SK-N-SH (cell line): ENCODE measurements at regions of chr11 and their contacts with region 1.

Region 1: GRCh38 chr11:123707606-123708205 is 33.8 kb downstream of the ZNF202 start:
- DNase-seq: peak; percentile 70
- H3K4me3 ChIP-seq: no peak overlapping the region
- H3K27ac ChIP-seq: no peak overlapping the region
- H3K4me1 ChIP-seq: peaks cover 0 to 2% of the 10 kb centered on the region in 2 experiments; a peak in 1 of 4 replicates
- H3K27me3 ChIP-seq: peaks cover 5% of the 10 kb centered on the region; the same call in 1 of the 2 replicates
- CTCF ChIP-seq: peak; percentile 91
- EP300 ChIP-seq: no peak
- RAD21 ChIP-seq: peak; percentile 99

Region 2: DNA sequence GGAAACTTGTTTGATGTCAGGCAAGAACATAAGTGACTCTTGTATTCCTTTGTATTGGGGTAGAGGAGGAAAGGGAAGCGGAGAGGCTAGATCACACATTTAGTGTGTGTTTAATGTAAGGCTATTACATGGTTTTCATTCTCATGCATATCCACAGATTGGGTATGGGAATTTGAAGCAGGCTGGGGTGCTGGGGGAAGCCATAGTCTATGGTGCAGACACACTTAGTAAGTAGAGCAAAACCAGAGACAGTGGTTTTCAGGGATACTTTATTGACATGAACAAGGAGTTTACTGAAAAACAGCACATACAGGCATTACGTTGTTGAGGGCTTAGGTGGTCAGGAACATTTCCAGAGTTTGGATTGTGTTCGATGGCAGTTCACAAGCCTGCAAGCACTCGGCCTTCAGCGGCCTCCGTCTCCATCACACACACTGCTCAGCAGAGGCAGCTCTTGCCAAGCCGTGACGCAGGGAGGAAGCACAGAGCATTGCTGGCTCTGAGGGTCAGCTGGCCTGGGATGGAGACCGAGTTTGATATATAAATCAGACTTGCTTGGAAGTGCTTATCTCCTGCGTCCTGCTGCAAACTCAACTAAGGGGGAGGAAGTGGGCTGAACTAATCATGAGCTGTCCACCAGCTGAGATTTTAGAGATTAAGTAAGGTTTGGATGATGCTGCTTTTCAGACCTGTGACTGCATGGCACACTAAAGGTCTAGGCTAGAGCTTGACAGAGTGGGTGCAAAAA is 78.6 kb before region 1 on chr11:
- CTCF ChIA-PET with region 1: interaction called, 441 read pairs
- POLR2A ChIA-PET with region 1: no interaction called
- DNase-seq: peak; percentile 74
- H3K4me3 ChIP-seq: no peak overlapping the region
- H3K27ac ChIP-seq: peak overlapping the region; percentile 43 to 85; a peak in 3 of 4 replicates
- H3K4me1 ChIP-seq: peaks cover 4 to 12% of the 10 kb centered on the region in 2 experiments; a peak in 2 of 4 replicates
- H3K27me3 ChIP-seq: no peaks in the 10 kb centered on the region
- CTCF ChIP-seq: no peak
- EP300 ChIP-seq: peak; percentile 23 to 28; a peak in 1 of 4 replicates
- RAD21 ChIP-seq: peak; percentile 21

Region 3: GRCh38 chr11:123654566-123655081 is 53.1 kb before region 1 on chr11 and contains the start of gene SCN3B:
- CTCF ChIA-PET with region 1: interaction called, 388 read pairs
- POLR2A ChIA-PET with region 1: interaction called, 12 read pairs
- DNase-seq: peak; percentile 99
- H3K4me3 ChIP-seq: peak within 1 kb of the TSS; percentile 72 to 76
- H3K27ac ChIP-seq: peak within 1 kb of the TSS in 1 of 2 experiments; percentile 90; a peak in 2 of 4 replicates
- H3K4me1 ChIP-seq: peaks cover 0 to 21% of the 10 kb centered on the region in 2 experiments; a peak in 2 of 4 replicates
- H3K27me3 ChIP-seq: peaks cover 15% of the 10 kb centered on the region; the same call in 1 of the 2 replicates
- CTCF ChIP-seq: no peak
- EP300 ChIP-seq: 0 out of 4 replicates have a peak, but pooled peaks of 1 of the 2 experiments have one; percentile 6
- RAD21 ChIP-seq: no peak
- polyA plus RNA-seq, gene SCN3B: 0.23 and 0.44 TPM in 2 replicates

Region 4: GRCh38 chr11:123682696-123683410 is 24.9 kb before region 1 on chr11:
- CTCF ChIA-PET with region 1: interaction called, 45 read pairs
- POLR2A ChIA-PET with region 1: interaction called, 4 read pairs
- DNase-seq: peak; percentile 75
- H3K4me3 ChIP-seq: no peak overlapping the region; a peak in 1 of 4 replicates
- H3K27ac ChIP-seq: peak overlapping the region in 1 of 2 experiments; percentile 98; a peak in 2 of 4 replicates
- H3K4me1 ChIP-seq: peaks cover 0 to 17% of the 10 kb centered on the region in 2 experiments; a peak in 2 of 4 replicates
- H3K27me3 ChIP-seq: peaks cover 6% of the 10 kb centered on the region; the same call in 1 of the 2 replicates
- CTCF ChIP-seq: no peak
- EP300 ChIP-seq: peak in 1 of 2 experiments; percentile 52; a peak in 2 of 4 replicates
- RAD21 ChIP-seq: peak; percentile 7; the same call in 1 of the 2 replicates

Region 5: GRCh38 chr11:123719452-123719851 is 11.7 kb after region 1 on chr11:
- CTCF ChIA-PET with region 1: interaction called, 29 read pairs
- POLR2A ChIA-PET with region 1: no interaction called
- DNase-seq: no peak
- H3K4me3 ChIP-seq: no peak overlapping the region
- H3K27ac ChIP-seq: no peak overlapping the region; a peak in 1 of 4 replicates
- H3K4me1 ChIP-seq: no peaks in the 10 kb centered on the region
- H3K27me3 ChIP-seq: peaks cover 7% of the 10 kb centered on the region; the same call in 1 of the 2 replicates
- CTCF ChIP-seq: no peak
- EP300 ChIP-seq: no peak
- RAD21 ChIP-seq: no peak

Region 6: DNA sequence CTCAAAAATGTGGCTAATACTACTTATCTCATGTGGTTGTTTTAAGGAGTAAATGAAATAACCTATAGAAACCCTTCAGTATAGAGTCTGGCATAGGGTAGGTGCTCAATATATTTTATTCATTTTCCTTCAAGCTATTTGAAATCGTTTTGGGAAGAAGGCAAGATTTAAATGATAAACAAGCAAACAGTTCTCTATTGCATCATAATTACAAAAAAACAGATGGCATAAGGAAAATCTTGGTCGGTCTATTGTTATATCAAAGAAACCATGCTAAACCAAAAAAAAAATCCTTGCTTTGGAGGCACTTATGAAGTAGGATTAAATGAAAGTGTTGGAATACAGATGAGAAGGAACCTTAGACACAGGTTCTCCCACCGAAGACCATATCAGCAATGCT is 29.1 kb after region 1 on chr11:
- CTCF ChIA-PET with region 1: interaction called, 16 read pairs
- POLR2A ChIA-PET with region 1: interaction called, 3 read pairs
- DNase-seq: no peak
- H3K4me3 ChIP-seq: no peak overlapping the region
- H3K27ac ChIP-seq: no peak overlapping the region
- H3K4me1 ChIP-seq: peaks cover 0 to 9% of the 10 kb centered on the region in 2 experiments; a peak in 2 of 4 replicates
- H3K27me3 ChIP-seq: no peaks in the 10 kb centered on the region
- CTCF ChIP-seq: no peak
- EP300 ChIP-seq: no peak
- RAD21 ChIP-seq: no peak